A549 (cell line): ENCODE measurements at regions of chr9 and their contacts with region 1.

Region 1: GRCh38 chr9:129884220-129885017 is 49.2 kb downstream of the USP20 start:
- DNase-seq: peak; percentile 76 to 83
- ATAC-seq: peak; percentile 86 to 92
- H3K4me3 ChIP-seq: peak overlapping the region; percentile 20; the same call in 2 of the 3 replicates
- H3K27ac ChIP-seq: peak overlapping the region; percentile 50 to 87
- H3K4me1 ChIP-seq: peaks cover 24% of the 10 kb centered on the region
- CTCF ChIP-seq: no peak
- EP300 ChIP-seq: no peak
- POLR2A ChIP-seq: peak; percentile 71
- RAD21 ChIP-seq: no peak

Region 2: DNA sequence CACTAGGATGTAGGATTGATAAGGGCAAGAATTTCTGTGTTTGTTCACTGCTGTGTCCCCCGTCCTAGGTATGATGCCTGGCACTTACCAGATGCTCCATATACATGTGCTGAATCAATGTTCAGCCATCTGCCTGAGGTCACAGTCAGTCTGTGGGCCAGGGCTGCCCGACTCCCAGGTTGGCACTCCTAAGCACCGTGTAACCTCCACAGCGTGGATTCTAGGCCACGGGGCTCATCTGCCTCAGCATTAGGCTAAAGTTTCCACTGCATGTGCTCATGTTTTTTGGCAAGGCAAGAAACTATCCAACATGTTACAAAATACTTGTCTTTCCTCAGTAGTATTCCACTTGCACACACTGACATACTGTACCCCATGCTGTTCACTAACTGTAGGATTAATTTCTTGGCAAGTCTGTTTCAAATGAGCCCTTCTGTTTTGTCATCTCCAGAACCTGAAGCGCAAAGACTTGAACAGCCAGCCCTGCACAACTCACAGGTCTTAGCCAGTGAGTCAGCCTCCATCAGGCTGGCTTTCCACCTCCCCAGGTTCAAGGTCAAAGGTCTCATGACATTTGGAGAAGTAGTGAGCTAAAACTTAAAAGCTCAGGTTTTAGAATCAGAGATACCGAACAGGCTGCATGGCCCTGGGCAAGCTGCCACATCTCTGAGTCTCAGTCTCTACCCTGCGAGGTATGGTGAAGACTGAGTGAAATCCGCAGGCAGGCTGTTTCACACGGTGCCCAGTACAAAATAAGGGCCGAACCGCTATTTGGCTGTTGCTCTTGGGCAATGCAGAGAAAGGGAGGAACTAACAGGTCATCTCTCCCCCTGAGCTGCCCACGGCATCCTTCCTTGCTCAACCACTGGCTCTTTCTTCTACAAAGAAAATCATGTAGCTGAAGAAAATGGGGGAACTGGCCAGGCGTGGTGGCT is 67.7 kb before region 1 on chr9:
- CTCF ChIA-PET with region 1: no interaction called
- POLR2A ChIA-PET with region 1: no interaction called
- DNase-seq: no peak
- ATAC-seq: no peak
- H3K4me3 ChIP-seq: no peak overlapping the region
- H3K27ac ChIP-seq: no peak overlapping the region
- H3K4me1 ChIP-seq: peaks cover 2% of the 10 kb centered on the region; the same call in 1 of the 3 replicates
- CTCF ChIP-seq: no peak
- EP300 ChIP-seq: no peak
- POLR2A ChIP-seq: no peak
- RAD21 ChIP-seq: no peak

Region 3: GRCh38 chr9:129860653-129861446 is 23.6 kb before region 1 on chr9:
- CTCF ChIA-PET with region 1: interaction called, 10 read pairs
- POLR2A ChIA-PET with region 1: no interaction called
- DNase-seq: no peak
- ATAC-seq: no peak
- H3K4me3 ChIP-seq: no peak overlapping the region
- H3K27ac ChIP-seq: no peak overlapping the region
- H3K4me1 ChIP-seq: no peaks in the 10 kb centered on the region
- CTCF ChIP-seq: no peak
- EP300 ChIP-seq: no peak
- POLR2A ChIP-seq: no peak
- RAD21 ChIP-seq: no peak

Region 4: GRCh38 chr9:129923589-129923988 is 39.2 kb after region 1 on chr9:
- CTCF ChIA-PET with region 1: interaction called, 14 read pairs
- POLR2A ChIA-PET with region 1: no interaction called
- DNase-seq: no peak
- ATAC-seq: no peak
- H3K4me3 ChIP-seq: no peak overlapping the region
- H3K27ac ChIP-seq: no peak overlapping the region
- H3K4me1 ChIP-seq: no peaks in the 10 kb centered on the region
- CTCF ChIP-seq: no peak
- EP300 ChIP-seq: no peak
- POLR2A ChIP-seq: no peak
- RAD21 ChIP-seq: no peak

Region 5: GRCh38 chr9:130042833-130043653 is 158.6 kb after region 1 on chr9 and contains the start of gene FNBP1:
- CTCF ChIA-PET with region 1: interaction called, 11 read pairs
- POLR2A ChIA-PET with region 1: interaction called, 10 read pairs
- DNase-seq: peak; percentile 74 to 83
- ATAC-seq: peak; percentile 84 to 86
- H3K4me3 ChIP-seq: peak within 1 kb of the TSS; percentile 99
- H3K27ac ChIP-seq: peak within 1 kb of the TSS; percentile 89 to 94
- H3K4me1 ChIP-seq: peaks cover 13% of the 10 kb centered on the region
- CTCF ChIP-seq: no peak
- EP300 ChIP-seq: no peak
- POLR2A ChIP-seq: peak; percentile 52
- RAD21 ChIP-seq: no peak; a peak in 1 of 5 replicates
- polyA plus RNA-seq, gene FNBP1: 15.6 and 17.9 TPM in 2 replicates

Region 6: GRCh38 chr9:130088051-130088450 is 203.6 kb after region 1 on chr9:
- CTCF ChIA-PET with region 1: interaction called, 10 read pairs
- POLR2A ChIA-PET with region 1: no interaction called
- DNase-seq: no peak
- ATAC-seq: no peak
- H3K4me3 ChIP-seq: no peak overlapping the region
- H3K27ac ChIP-seq: no peak overlapping the region
- H3K4me1 ChIP-seq: no peaks in the 10 kb centered on the region
- CTCF ChIP-seq: no peak
- EP300 ChIP-seq: no peak
- POLR2A ChIP-seq: no peak
- RAD21 ChIP-seq: no peak